Caco-2 (cell line): ENCODE measurements at regions of chr20 and their contacts with region 1.

Region 1: GRCh38 chr20:13638496-13639222 is at the start of gene TASP1:
- DNase-seq: peak; percentile 99 to 100
- H3K4me3 ChIP-seq: peak within 1 kb of the TSS; percentile 84
- H3K4me3 Mint-ChIP-seq: peak within 1 kb of the TSS; percentile 86
- H3K27ac Mint-ChIP-seq: peak within 1 kb of the TSS; percentile 85
- H3K4me1 ChIP-seq: peaks cover 10% of the 10 kb centered on the region; the same call in 1 of the 2 replicates
- H3K4me1 Mint-ChIP-seq: peaks cover 9% of the 10 kb centered on the region
- H3K27me3 ChIP-seq: no peaks in the 10 kb centered on the region
- H3K27me3 Mint-ChIP-seq: no peaks in the 10 kb centered on the region
- CTCF ChIP-seq: no peak
- total RNA-seq, gene TASP1: 22.7 and 27.4 TPM in 2 replicates

Region 2: GRCh38 chr20:13681248-13682125 is 42.8 kb after region 1 on chr20:
- CTCF ChIA-PET with region 1: no interaction called
- POLR2A ChIA-PET with region 1: no interaction called
- intact Hi-C with region 1: loop called (anchors 1 kb)
- DNase-seq: peak; percentile 84 to 88
- H3K4me3 ChIP-seq: no peak overlapping the region
- H3K4me3 Mint-ChIP-seq: peak overlapping the region; percentile 58
- H3K27ac Mint-ChIP-seq: peak overlapping the region; percentile 98
- H3K4me1 ChIP-seq: peaks cover 27% of the 10 kb centered on the region
- H3K4me1 Mint-ChIP-seq: peaks cover 23% of the 10 kb centered on the region
- H3K27me3 ChIP-seq: no peaks in the 10 kb centered on the region
- H3K27me3 Mint-ChIP-seq: no peaks in the 10 kb centered on the region
- CTCF ChIP-seq: no peak

Region 3: GRCh38 chr20:13723011-13723410 is 84.4 kb after region 1 on chr20:
- CTCF ChIA-PET with region 1: no interaction called
- POLR2A ChIA-PET with region 1: no interaction called
- intact Hi-C with region 1: loop called (anchors 5 kb)
- DNase-seq: no peak
- H3K4me3 ChIP-seq: no peak overlapping the region
- H3K4me3 Mint-ChIP-seq: no peak overlapping the region
- H3K27ac Mint-ChIP-seq: no peak overlapping the region
- H3K4me1 ChIP-seq: no peaks in the 10 kb centered on the region
- H3K4me1 Mint-ChIP-seq: no peaks in the 10 kb centered on the region
- H3K27me3 ChIP-seq: no peaks in the 10 kb centered on the region
- H3K27me3 Mint-ChIP-seq: no peaks in the 10 kb centered on the region
- CTCF ChIP-seq: no peak

Region 4: DNA sequence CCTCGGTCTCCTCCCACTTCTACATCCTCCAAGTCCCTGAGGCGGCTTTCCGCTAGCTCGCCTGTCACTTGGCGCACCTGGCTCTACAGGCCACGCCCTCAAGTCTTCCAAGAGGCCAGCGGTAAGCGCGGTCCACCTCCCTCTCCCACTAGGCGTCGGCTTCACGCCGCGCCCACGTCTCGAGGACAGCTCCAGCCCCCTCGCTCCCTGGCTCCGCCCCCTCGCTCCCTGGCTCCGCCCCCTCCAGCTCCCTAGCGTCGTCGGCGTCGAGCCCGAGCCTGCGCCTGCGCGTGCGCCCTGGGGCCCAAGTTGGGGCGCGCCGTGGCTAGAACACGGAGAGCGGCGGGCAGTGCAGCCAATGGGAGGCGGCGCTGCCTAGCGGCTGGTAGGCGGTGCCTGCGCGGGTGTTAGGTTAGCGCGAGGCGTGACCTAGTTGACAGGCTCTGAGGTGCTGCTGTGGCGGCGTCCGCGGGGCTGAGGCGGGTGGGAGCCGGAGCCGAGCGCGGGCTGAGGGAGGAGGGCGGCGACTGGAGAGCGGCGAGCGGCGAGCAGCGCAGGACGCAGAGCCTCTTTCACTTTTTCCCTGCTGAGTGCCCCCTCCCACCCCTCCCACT is 356.5 kb after region 1 on chr20 and contains the start of gene MACROD2:
- CTCF ChIA-PET with region 1: no interaction called
- POLR2A ChIA-PET with region 1: no interaction called
- intact Hi-C with region 1: loop called (anchors 10 kb)
- DNase-seq: peak; percentile 96 to 98
- H3K4me3 ChIP-seq: peak within 1 kb of the TSS; percentile 97
- H3K4me3 Mint-ChIP-seq: peak within 1 kb of the TSS; percentile 86
- H3K27ac Mint-ChIP-seq: peak within 1 kb of the TSS; percentile 40
- H3K4me1 ChIP-seq: peaks cover 7% of the 10 kb centered on the region; the same call in 1 of the 2 replicates
- H3K4me1 Mint-ChIP-seq: peaks cover 7% of the 10 kb centered on the region
- H3K27me3 ChIP-seq: no peaks in the 10 kb centered on the region
- H3K27me3 Mint-ChIP-seq: peaks cover 14% of the 10 kb centered on the region
- CTCF ChIP-seq: no peak
- total RNA-seq, gene MACROD2: 6.4 and 7.6 TPM in 2 replicates